Activated CD4-positive, alpha-beta T cell treated with anti-CD3 and anti-CD28 coated beads, Interleukin-2, amount 10 ng/mL, durations not matched to agents 7 days and 5 days (primary cell): ENCODE measurements at regions of chr11 and their contacts with region 1.

Region 1: DNA sequence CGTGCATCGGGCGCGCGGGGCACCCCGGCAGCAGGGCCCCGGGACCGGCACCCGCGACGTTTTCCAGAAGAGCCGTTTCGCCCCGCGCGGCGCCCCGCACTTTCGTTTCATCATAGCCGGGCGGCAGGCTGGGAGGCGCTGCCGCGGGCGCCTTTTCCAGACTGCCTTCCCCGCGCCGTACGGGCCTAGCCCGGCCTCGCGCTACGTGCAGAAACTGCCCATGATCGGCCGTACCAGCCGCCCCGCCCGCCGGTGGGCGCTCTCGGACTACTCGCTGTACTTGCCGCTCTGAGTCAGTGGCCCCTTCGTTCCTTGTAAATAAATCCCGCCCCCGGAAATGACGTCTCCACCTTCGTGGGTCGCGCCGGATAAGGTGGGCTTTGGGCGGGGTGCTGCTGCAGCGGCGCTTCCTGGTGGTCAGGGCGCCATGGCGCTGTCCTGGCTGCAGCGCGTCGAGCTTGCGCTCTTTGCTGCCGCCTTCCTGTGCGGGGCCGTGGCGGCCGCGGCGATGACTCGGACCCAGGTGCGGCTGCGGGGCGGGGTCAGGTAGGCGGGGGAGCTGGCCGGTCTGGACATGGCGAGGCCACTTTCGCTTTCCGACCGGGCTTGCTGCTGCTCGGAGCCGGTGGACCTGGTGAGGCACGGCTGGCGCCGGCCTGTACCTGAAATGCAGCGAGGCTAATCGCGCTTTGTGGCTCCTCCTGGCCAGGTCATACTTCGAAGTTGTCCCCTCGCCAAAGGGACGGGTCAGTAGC is at the start of gene TMEM179B:
- DNase-seq: peak; percentile 99
- H3K4me3 Mint-ChIP-seq: peak within 1 kb of the TSS; percentile 95
- H3K27ac Mint-ChIP-seq: peak within 1 kb of the TSS; percentile 97
- H3K4me1 Mint-ChIP-seq: peaks cover 46% of the 10 kb centered on the region
- H3K27me3 Mint-ChIP-seq: no peaks in the 10 kb centered on the region
- total RNA-seq, gene TMEM179B: 46.8 to 55.9 TPM

Region 2: GRCh38 chr11:62315431-62315830 is 471.8 kb before region 1 on chr11:
- CTCF ChIA-PET with region 1: no interaction called
- POLR2A ChIA-PET with region 1: no interaction called
- DNase-seq: no peak
- H3K4me3 Mint-ChIP-seq: no peak overlapping the region
- H3K27ac Mint-ChIP-seq: no peak overlapping the region
- H3K4me1 Mint-ChIP-seq: peaks cover 9% of the 10 kb centered on the region
- H3K27me3 Mint-ChIP-seq: peaks cover 22% of the 10 kb centered on the region

Region 3: DNA sequence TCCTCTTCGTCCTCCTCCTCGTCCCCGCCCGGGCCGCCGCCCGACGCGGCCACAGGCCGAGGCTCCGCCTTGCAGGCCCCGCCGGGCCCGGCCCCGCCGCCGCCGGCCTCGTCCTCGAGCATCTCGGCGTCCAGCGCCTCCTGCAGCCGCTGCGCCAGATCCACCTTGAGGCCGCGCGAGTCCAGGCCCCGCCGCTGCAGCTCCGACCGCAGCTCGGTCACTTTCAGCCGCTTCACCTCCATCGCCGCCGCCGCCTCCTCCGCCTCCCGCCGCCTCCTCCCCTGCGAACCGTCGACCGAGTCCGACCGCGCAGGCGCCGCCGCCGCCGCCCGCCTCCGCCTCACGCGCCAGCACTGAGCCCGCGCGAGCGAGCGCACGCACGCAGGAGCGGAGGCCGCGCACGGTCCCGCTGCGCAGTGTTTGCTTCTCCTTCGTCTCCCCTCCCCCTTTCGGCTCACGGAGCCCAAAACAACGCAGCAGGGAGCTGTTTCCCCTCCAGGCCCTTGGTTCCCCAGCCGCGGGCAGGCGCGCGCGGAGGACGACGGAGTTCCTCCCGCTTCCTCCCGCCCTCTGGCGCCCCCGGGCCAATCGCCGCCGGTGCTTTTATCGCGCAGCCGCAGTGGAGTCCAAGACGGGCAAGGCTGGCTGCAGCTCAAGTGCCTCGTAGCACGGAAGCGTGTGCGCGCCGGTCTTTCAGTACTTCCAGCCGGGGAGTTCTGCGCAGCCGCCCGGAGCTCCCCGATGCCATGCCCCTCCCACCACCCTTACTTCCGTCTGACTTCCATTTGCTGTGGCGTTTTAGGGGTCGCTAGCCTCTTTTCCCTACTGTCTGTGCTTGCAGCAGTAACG is 60.0 kb before region 1 on chr11 and contains the start of gene HNRNPUL2:
- CTCF ChIA-PET with region 1: interaction called, 11 read pairs
- POLR2A ChIA-PET with region 1: no interaction called
- DNase-seq: peak; percentile 98
- H3K4me3 Mint-ChIP-seq: peak within 1 kb of the TSS; percentile 96
- H3K27ac Mint-ChIP-seq: peak within 1 kb of the TSS; percentile 98
- H3K4me1 Mint-ChIP-seq: peaks cover 54% of the 10 kb centered on the region
- H3K27me3 Mint-ChIP-seq: no peaks in the 10 kb centered on the region
- total RNA-seq, gene HNRNPUL2: 67.9 to 69.0 TPM

Region 4: GRCh38 chr11:62771144-62772021 is 15.8 kb before region 1 on chr11 and contains the start of gene TAF6L:
- CTCF ChIA-PET with region 1: interaction called, 170 read pairs
- POLR2A ChIA-PET with region 1: no interaction called
- DNase-seq: peak; percentile 95
- H3K4me3 Mint-ChIP-seq: peak within 1 kb of the TSS; percentile 79
- H3K27ac Mint-ChIP-seq: peak within 1 kb of the TSS; percentile 93
- H3K4me1 Mint-ChIP-seq: peaks cover 26% of the 10 kb centered on the region
- H3K27me3 Mint-ChIP-seq: no peaks in the 10 kb centered on the region
- total RNA-seq, gene TAF6L: 17.7 to 19.4 TPM

Region 5: GRCh38 chr11:62805076-62805892 is 18.1 kb after region 1 on chr11 and contains the start of gene NXF1:
- CTCF ChIA-PET with region 1: interaction called, 20 read pairs
- POLR2A ChIA-PET with region 1: no interaction called
- DNase-seq: peak; percentile 93
- H3K4me3 Mint-ChIP-seq: peak within 1 kb of the TSS; percentile 95
- H3K27ac Mint-ChIP-seq: peak within 1 kb of the TSS; percentile 95
- H3K4me1 Mint-ChIP-seq: peaks cover 26% of the 10 kb centered on the region
- H3K27me3 Mint-ChIP-seq: no peaks in the 10 kb centered on the region
- total RNA-seq, gene NXF1: 110 to 121 TPM

Region 6: GRCh38 chr11:62841361-62842184 is 54.4 kb after region 1 on chr11:
- CTCF ChIA-PET with region 1: interaction called, 18 read pairs
- POLR2A ChIA-PET with region 1: interaction called, 24 read pairs
- DNase-seq: peak; percentile 93
- H3K4me3 Mint-ChIP-seq: no peak overlapping the region
- H3K27ac Mint-ChIP-seq: no peak overlapping the region
- H3K4me1 Mint-ChIP-seq: peaks cover 16% of the 10 kb centered on the region
- H3K27me3 Mint-ChIP-seq: no peaks in the 10 kb centered on the region

Region 7: GRCh38 chr11:62860835-62861563 is 73.8 kb after region 1 on chr11:
- CTCF ChIA-PET with region 1: interaction called, 34 read pairs
- POLR2A ChIA-PET with region 1: interaction called, 4 read pairs
- DNase-seq: no peak
- H3K4me3 Mint-ChIP-seq: no peak overlapping the region
- H3K27ac Mint-ChIP-seq: peak overlapping the region; percentile 74
- H3K4me1 Mint-ChIP-seq: peaks cover 57% of the 10 kb centered on the region
- H3K27me3 Mint-ChIP-seq: no peaks in the 10 kb centered on the region

Region 8: GRCh38 chr11:62925745-62926679 is 138.8 kb after region 1 on chr11:
- CTCF ChIA-PET with region 1: no interaction called
- POLR2A ChIA-PET with region 1: no interaction called
- DNase-seq: no peak
- H3K4me3 Mint-ChIP-seq: no peak overlapping the region
- H3K27ac Mint-ChIP-seq: peak overlapping the region; percentile 41
- H3K4me1 Mint-ChIP-seq: peaks cover 20% of the 10 kb centered on the region
- H3K27me3 Mint-ChIP-seq: peaks cover 83% of the 10 kb centered on the region